Caco-2 (cell line): ENCODE measurements at regions of chr21 and their contacts with region 1.

Region 1: GRCh38 chr21:44932408-44933181 is 7.2 kb upstream of the SLX9 start:
- DNase-seq: peak in 1 of 2 experiments; percentile 68
- H3K4me3 ChIP-seq: peak overlapping the region; percentile 44
- H3K4me3 Mint-ChIP-seq: peak overlapping the region; percentile 55
- H3K27ac Mint-ChIP-seq: no peak overlapping the region
- H3K4me1 ChIP-seq: peaks cover 16% of the 10 kb centered on the region
- H3K4me1 Mint-ChIP-seq: peaks cover 8% of the 10 kb centered on the region
- H3K27me3 ChIP-seq: no peaks in the 10 kb centered on the region
- H3K27me3 Mint-ChIP-seq: peaks cover 2% of the 10 kb centered on the region
- CTCF ChIP-seq: peak; percentile 28 to 48

Region 2: GRCh38 chr21:44487831-44488230 is 444.8 kb before region 1 on chr21:
- CTCF ChIA-PET with region 1: no interaction called
- POLR2A ChIA-PET with region 1: no interaction called
- intact Hi-C with region 1: no loop called
- DNase-seq: peak in 1 of 2 experiments; percentile 31
- H3K4me3 ChIP-seq: no peak overlapping the region
- H3K4me3 Mint-ChIP-seq: no peak overlapping the region
- H3K27ac Mint-ChIP-seq: no peak overlapping the region
- H3K4me1 ChIP-seq: peaks cover 8% of the 10 kb centered on the region
- H3K4me1 Mint-ChIP-seq: peaks cover 6% of the 10 kb centered on the region
- H3K27me3 ChIP-seq: no peaks in the 10 kb centered on the region
- H3K27me3 Mint-ChIP-seq: no peaks in the 10 kb centered on the region
- CTCF ChIP-seq: peak; percentile 37 to 56

Region 3: GRCh38 chr21:44892536-44893277 is 39.9 kb before region 1 on chr21:
- CTCF ChIA-PET with region 1: interaction called, 11 read pairs
- POLR2A ChIA-PET with region 1: no interaction called
- intact Hi-C with region 1: loop called (anchors 2 kb)
- DNase-seq: peak in 1 of 2 experiments; percentile 71
- H3K4me3 ChIP-seq: no peak overlapping the region
- H3K4me3 Mint-ChIP-seq: no peak overlapping the region
- H3K27ac Mint-ChIP-seq: no peak overlapping the region
- H3K4me1 ChIP-seq: no peaks in the 10 kb centered on the region
- H3K4me1 Mint-ChIP-seq: no peaks in the 10 kb centered on the region
- H3K27me3 ChIP-seq: no peaks in the 10 kb centered on the region
- H3K27me3 Mint-ChIP-seq: peaks cover 4% of the 10 kb centered on the region
- CTCF ChIP-seq: peak; percentile 68 to 81